MCF 10A (cell line): ENCODE measurements at regions of chr2 and their contacts with region 1.

Region 1: GRCh38 chr2:55885129-55885943 is 38.2 kb downstream of the EFEMP1 start:
- DNase-seq: peak; percentile 91
- H3K4me3 Mint-ChIP-seq: no peak overlapping the region
- H3K27ac Mint-ChIP-seq: peak overlapping the region; percentile 97
- H3K4me1 Mint-ChIP-seq: peaks cover 64% of the 10 kb centered on the region
- H3K27me3 Mint-ChIP-seq: no peaks in the 10 kb centered on the region
- CTCF ChIP-seq: no peak

Region 2: GRCh38 chr2:55779459-55780421 is 105.6 kb before region 1 on chr2:
- CTCF ChIA-PET with region 1: no interaction called
- POLR2A ChIA-PET with region 1: interaction called, 10 read pairs
- intact Hi-C with region 1: no loop called
- DNase-seq: peak; percentile 90
- H3K4me3 Mint-ChIP-seq: peak overlapping the region; percentile 41
- H3K27ac Mint-ChIP-seq: peak overlapping the region; percentile 97
- H3K4me1 Mint-ChIP-seq: peaks cover 36% of the 10 kb centered on the region
- H3K27me3 Mint-ChIP-seq: no peaks in the 10 kb centered on the region
- CTCF ChIP-seq: no peak

Region 3: DNA sequence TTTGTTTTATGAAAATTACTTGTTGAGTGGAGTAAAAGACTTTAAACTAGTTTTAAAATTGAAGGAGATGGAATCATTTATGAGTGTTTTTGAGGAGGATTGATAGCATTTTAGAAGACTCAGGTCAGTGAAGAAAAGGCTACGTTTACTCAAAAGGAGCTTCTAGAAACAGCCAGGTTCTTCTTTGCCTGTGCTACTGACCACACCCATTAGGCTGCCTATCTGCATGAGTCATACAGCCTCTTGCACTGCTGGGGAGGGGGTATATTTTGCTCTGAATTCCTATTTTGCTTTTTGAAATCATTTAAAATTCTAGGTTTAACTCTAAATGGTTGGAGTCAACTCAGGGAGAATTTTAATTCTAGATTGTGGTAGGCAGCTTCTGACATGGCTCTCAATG is 16.0 kb after region 1 on chr2:
- CTCF ChIA-PET with region 1: interaction called, 3 read pairs
- POLR2A ChIA-PET with region 1: interaction called, 47 read pairs
- intact Hi-C with region 1: no loop called
- DNase-seq: peak; percentile 70
- H3K4me3 Mint-ChIP-seq: peak overlapping the region; percentile 54
- H3K27ac Mint-ChIP-seq: peak overlapping the region; percentile 98
- H3K4me1 Mint-ChIP-seq: peaks cover 23% of the 10 kb centered on the region
- H3K27me3 Mint-ChIP-seq: no peaks in the 10 kb centered on the region
- CTCF ChIP-seq: no peak